ENCODE measurements at regions of chr11 and their contacts with region 1.

Region 1: GRCh38 chr11:112074026-112074811 is at the start of gene NKAPD1:
- DNase-seq: peak; percentile 56 to 88 (median 78)
- H3K4me3 ChIP-seq: peak within 1 kb of the TSS; percentile 69 to 99 (median 89)
- H3K27ac ChIP-seq: peak within 1 kb of the TSS; percentile 63 to 97 (median 93)
- H3K27me3 ChIP-seq: no peaks in the 10 kb centered on the region
- CTCF ChIP-seq: peak in 41 of 56 donors; percentile 7 to 62 (median 28)
- total RNA-seq, gene NKAPD1: 10.4 to 25.6 (median 15.2) TPM

Region 2: DNA sequence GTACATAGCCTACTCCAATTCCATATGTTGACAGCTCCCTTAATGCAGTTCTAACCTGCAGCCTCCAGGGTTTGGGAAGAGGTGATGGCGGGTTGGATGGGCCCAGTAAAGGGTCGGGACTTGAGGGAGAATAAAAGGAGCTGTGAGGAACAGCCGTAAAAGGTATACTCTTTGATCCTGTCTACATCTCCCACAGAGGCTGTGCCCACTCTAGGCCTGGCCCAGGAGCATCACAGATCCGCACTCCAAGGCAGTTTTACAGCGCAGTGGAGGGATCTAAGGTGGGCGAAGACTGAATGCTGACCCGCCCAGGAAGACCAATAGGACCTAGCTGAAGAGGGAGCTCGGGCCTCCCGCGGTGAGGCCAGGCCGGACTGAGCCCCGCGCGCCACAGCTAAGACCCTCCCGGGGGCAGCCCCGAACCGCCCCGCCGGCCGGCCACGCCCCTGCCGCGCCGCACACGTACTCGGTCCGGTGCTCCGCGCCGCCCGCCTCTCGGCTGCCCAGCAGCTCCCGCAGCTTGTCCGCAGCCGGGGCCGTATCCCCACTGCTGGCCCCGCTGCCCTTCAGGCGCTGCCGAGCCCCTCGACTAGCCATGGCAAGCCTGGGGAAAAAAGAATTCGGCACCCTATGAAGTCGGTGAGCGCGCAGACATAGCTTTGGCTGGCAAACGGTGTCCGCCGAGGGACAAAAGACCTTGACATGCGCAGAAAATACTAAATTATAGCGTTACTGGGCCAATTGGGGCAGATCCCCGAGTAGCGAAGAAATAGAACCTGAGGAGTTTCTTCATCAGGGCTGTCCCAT is 203.1 kb before region 1 on chr11 and contains the start of gene ALG9:
- intact Hi-C with region 1: loop called in 1 of 2 experiments (anchors 5 kb)
- DNase-seq: peak; percentile 56 to 83 (median 79)
- H3K4me3 ChIP-seq: peak within 1 kb of the TSS; percentile 69 to 99 (median 89)
- H3K27ac ChIP-seq: peak within 1 kb of the TSS; percentile 52 to 99 (median 91)
- H3K27me3 ChIP-seq: no peaks in the 10 kb centered on the region
- CTCF ChIP-seq: peak in 31 of 56 donors; percentile 3 to 48 (median 23)
- total RNA-seq, gene ALG9: 27.6 to 49.9 (median 37.3) TPM

Region 3: GRCh38 chr11:111938687-111939160 is 135.5 kb before region 1 on chr11:
- intact Hi-C with region 1: loop called in 1 of 2 experiments (anchors 5 kb)
- DNase-seq: peak in 1 of 10 donors; percentile 75
- H3K4me3 ChIP-seq: peak overlapping the region in 54 of 59 donors; percentile 7 to 86 (median 70)
- H3K27ac ChIP-seq: peak overlapping the region; percentile 51 to 96 (median 92)
- H3K27me3 ChIP-seq: no peaks in the 10 kb centered on the region
- CTCF ChIP-seq: peak in 1 of 56 donors; percentile 7

Region 4: GRCh38 chr11:112086422-112087191 is 12.4 kb after region 1 on chr11 and contains the starts of genes SDHD and TIMM8B:
- intact Hi-C with region 1: loop called in 1 of 2 experiments (anchors 1 kb)
- DNase-seq: peak; percentile 88 to 97 (median 95)
- H3K4me3 ChIP-seq: peak within 1 kb of the TSS; percentile 68 to 100 (median 94)
- H3K27ac ChIP-seq: peak within 1 kb of the TSS in 55 of 59 donors; percentile 14 to 94 (median 76)
- H3K27me3 ChIP-seq: no peaks in the 10 kb centered on the region
- CTCF ChIP-seq: peak in 52 of 56 donors; percentile 25 to 73 (median 56)
- total RNA-seq, gene SDHD: 43.8 to 85.0 (median 65.3) TPM
- total RNA-seq, gene TIMM8B: 25.1 to 51.5 (median 35.6) TPM

Measured in dorsolateral prefrontal cortex (tissue), 120 donors.